Activated CD4-positive, alpha-beta T cell treated with anti-CD3 and anti-CD28 coated beads for 36 hours (primary cell): ENCODE measurements at regions of chr5 and their contacts with region 1.

Region 1: DNA sequence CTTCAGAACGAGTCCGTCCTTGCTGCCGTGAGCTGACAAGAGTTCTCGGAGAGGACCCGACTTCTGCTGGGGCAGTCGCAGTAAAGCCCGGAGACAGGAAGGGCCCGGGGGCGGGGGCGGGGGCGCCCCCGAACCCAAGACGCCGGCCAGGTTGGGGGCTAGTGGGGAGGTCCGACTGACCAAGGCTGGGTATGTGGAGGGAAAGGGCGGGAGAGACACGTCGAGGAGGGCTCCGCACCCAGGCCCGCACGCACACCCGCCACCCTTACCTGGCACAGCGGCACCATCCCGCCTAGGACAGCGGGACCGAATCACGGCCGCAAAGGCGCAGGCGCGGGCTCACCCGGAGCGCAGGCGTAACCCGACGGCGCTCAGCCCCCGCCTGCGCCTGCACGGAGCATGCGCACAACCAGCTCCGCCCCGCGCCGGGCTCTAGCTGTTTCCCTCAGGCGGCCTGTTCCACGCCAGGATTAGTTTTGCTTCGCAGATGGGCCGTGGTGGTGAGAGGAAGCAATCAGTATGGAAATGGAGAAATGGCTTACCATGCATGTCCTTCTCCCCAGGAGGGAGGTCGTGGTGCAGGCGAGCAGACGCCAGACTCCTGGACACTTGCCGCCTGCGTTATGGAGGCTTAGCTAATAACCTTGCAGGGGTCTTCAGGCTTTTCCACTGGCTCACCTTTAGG is at the start of gene MOCS2:
- DNase-seq: peak; percentile 95
- ATAC-seq: peak; percentile 99
- H3K4me3 Mint-ChIP-seq: peak within 1 kb of the TSS; percentile 93
- H3K27ac Mint-ChIP-seq: peak within 1 kb of the TSS; percentile 94
- H3K4me1 Mint-ChIP-seq: peaks cover 44% of the 10 kb centered on the region
- H3K27me3 Mint-ChIP-seq: no peaks in the 10 kb centered on the region
- total RNA-seq, gene MOCS2: 21.0 to 21.3 TPM

Region 2: GRCh38 chr5:52799983-52800393 is 309.6 kb before region 1 on chr5:
- CTCF ChIA-PET with region 1: no interaction called
- POLR2A ChIA-PET with region 1: no interaction called
- intact Hi-C with region 1: loop called (anchors 1 to 5 kb)
- DNase-seq: peak; percentile 98
- ATAC-seq: peak; percentile 91
- H3K4me3 Mint-ChIP-seq: peak overlapping the region; percentile 91
- H3K27ac Mint-ChIP-seq: peak overlapping the region; percentile 97
- H3K4me1 Mint-ChIP-seq: peaks cover 47% of the 10 kb centered on the region
- H3K27me3 Mint-ChIP-seq: no peaks in the 10 kb centered on the region

Region 3: DNA sequence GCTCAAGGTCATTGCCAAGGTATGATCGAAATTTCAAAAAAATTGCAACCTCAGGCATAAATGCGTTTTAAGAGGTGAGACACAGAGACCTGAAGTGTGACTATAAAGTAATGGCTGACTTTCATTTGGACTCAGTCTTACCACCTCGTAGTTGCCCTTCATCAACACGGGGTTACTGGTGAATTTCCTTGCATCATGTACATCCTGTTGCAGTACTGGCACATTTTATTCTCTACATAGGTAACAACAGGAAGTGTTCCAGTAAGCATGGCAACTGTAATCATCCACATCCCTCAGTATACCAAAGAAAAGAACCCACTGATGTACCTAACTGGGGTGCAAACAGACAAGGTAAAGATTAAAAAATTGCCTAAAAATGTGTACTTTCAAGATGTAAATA is 29.3 kb before region 1 on chr5:
- CTCF ChIA-PET with region 1: no interaction called
- POLR2A ChIA-PET with region 1: no interaction called
- intact Hi-C with region 1: no loop called
- DNase-seq: no peak
- ATAC-seq: peak; percentile 90
- H3K4me3 Mint-ChIP-seq: no peak overlapping the region
- H3K27ac Mint-ChIP-seq: no peak overlapping the region
- H3K4me1 Mint-ChIP-seq: peaks cover 26% of the 10 kb centered on the region
- H3K27me3 Mint-ChIP-seq: peaks cover 18% of the 10 kb centered on the region

Region 4: DNA sequence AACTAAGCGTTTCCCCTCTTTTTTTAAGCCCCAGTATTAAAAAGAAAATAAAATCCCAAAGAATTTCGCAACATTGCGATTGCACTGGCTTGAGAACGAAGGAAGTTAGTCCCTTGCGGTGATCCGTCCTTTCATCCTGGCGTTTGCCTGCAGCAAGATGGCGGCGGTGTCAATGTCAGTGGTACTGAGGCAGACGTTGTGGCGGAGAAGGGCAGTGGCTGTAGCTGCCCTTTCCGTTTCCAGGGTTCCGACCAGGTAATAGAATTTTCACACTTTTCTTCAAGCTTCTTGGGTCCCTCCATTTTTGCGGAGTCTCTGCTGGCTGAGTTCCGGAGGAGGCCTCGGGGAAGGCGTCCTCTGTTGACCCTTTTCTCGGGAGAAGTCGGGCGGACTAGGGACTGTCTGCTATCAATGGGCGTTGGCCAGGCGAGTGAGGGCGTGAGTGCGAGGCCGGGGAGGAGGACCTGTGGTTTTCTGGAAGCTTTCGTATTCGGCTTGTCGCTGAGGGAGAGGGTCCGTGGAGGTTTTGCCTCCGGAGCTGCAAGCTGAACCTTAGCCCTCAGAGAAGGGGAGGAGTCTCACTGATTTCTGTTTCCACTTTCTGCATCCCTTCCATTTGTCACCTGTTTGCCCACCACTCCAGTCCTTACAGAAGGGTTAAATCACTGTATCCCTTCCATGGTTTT is 451.1 kb after region 1 on chr5 and contains the start of gene NDUFS4:
- CTCF ChIA-PET with region 1: no interaction called
- POLR2A ChIA-PET with region 1: no interaction called
- intact Hi-C with region 1: loop called in 1 of 2 experiments (anchors 2 kb)
- DNase-seq: peak; percentile 92
- ATAC-seq: peak; percentile 91
- H3K4me3 Mint-ChIP-seq: peak within 1 kb of the TSS; percentile 84
- H3K27ac Mint-ChIP-seq: peak within 1 kb of the TSS; percentile 92
- H3K4me1 Mint-ChIP-seq: peaks cover 25% of the 10 kb centered on the region
- H3K27me3 Mint-ChIP-seq: peaks cover 20% of the 10 kb centered on the region
- total RNA-seq, gene NDUFS4: 52.2 to 69.1 TPM

Region 5: GRCh38 chr5:54217826-54218503 is 1108.4 kb after region 1 on chr5:
- CTCF ChIA-PET with region 1: no interaction called
- POLR2A ChIA-PET with region 1: no interaction called
- intact Hi-C with region 1: no loop called
- DNase-seq: peak; percentile 12
- ATAC-seq: no peak
- H3K4me3 Mint-ChIP-seq: no peak overlapping the region
- H3K27ac Mint-ChIP-seq: no peak overlapping the region
- H3K4me1 Mint-ChIP-seq: peaks cover 7% of the 10 kb centered on the region
- H3K27me3 Mint-ChIP-seq: no peaks in the 10 kb centered on the region